PC-3 (cell line): ENCODE measurements at regions of chr4 and their contacts with region 1.

Region 1: DNA sequence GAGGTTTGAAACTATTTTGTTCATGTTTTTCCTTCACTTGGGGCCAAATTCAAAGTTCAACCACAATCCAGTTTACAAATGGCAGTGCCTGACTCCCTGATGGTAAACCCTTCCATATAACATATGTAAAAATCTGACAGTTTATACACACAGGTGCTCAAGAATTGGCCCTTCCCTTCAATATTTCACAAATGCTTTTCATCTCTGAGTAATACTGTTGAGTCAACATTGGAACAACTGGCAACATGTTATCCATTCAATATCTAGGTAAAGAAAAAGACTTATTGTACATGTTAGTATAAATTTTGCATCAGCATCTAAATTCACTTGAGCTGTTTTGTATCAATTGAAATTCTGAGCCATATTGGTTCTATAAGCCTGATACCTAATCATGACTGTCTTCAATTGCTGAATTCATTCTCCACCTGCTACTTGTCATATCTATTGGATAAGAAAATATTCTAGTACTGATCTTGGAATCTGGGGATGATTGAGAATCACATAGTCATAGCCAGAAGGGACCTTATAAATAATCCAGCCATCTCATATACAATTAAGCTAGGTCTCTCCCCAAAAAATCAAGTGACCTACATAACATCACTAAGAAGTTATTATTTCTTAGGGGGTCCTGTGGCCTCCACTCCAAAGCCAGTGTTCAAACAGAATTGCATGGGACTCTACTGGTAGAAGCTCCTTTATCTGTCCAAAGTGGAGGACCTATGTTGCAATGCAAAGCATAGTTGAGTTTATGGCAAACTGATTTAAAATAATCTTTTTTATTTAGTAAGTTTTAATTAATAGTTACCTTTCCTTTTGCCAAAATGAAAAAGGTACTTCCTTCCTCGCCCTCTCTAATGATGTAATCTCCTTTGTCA is 61.9 kb downstream of the PRKG2 start:
- DNase-seq: peak; percentile 69
- ATAC-seq: peak; percentile 82
- H3K4me3 ChIP-seq: peak overlapping the region; percentile 61
- H3K27ac ChIP-seq: peak overlapping the region; percentile 30
- H3K4me1 ChIP-seq: peaks cover 13% of the 10 kb centered on the region
- H3K27me3 ChIP-seq: no peaks in the 10 kb centered on the region
- CTCF ChIP-seq: no peak

Region 2: DNA sequence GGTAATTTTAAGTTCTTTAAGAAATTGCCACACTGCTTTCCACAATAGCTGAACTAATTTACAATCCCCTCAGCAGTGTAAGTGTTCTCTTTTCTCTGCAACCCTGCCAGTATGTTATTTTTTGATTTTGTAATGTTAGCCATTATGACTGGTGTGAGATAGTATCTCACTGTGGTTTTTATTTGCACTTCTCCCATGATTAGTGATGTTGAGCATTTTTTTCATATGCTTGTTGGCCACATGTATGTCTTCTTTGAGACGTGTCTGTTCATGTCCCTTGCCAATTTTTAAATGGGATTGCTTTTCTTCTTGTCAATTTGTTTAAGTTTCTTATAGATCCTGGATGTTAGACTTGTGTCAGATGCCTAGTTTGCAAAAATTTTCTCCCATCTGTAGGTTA is 36.5 kb before region 1 on chr4:
- CTCF ChIA-PET with region 1: no interaction called
- POLR2A ChIA-PET with region 1: no interaction called
- intact Hi-C with region 1: loop called (anchors 5 kb)
- DNase-seq: no peak
- ATAC-seq: no peak
- H3K4me3 ChIP-seq: no peak overlapping the region
- H3K27ac ChIP-seq: no peak overlapping the region
- H3K4me1 ChIP-seq: peaks cover 16% of the 10 kb centered on the region
- H3K27me3 ChIP-seq: no peaks in the 10 kb centered on the region
- CTCF ChIP-seq: no peak